Activated CD8-positive, alpha-beta T cell treated with anti-CD3 and anti-CD28 coated beads for 36 hours (primary cell): ENCODE measurements at regions of chr10 and their contacts with region 1.

Region 1: GRCh38 chr10:60964257-60965235 is 20.6 kb upstream of the RHOBTB1 start:
- DNase-seq: peak; percentile 64
- ATAC-seq: peak; percentile 75
- H3K4me3 Mint-ChIP-seq: no peak overlapping the region
- H3K27ac Mint-ChIP-seq: no peak overlapping the region
- H3K4me1 Mint-ChIP-seq: peaks cover 16% of the 10 kb centered on the region
- H3K27me3 Mint-ChIP-seq: peaks cover 10% of the 10 kb centered on the region
- CTCF ChIP-seq: peak; percentile 57

Region 2: GRCh38 chr10:60816628-60817397 is 147.7 kb before region 1 on chr10:
- CTCF ChIA-PET with region 1: interaction called, 9 read pairs
- POLR2A ChIA-PET with region 1: no interaction called
- intact Hi-C with region 1: loop called (anchors 2 kb)
- DNase-seq: peak; percentile 33
- ATAC-seq: peak; percentile 85
- H3K4me3 Mint-ChIP-seq: no peak overlapping the region
- H3K27ac Mint-ChIP-seq: no peak overlapping the region
- H3K4me1 Mint-ChIP-seq: no peaks in the 10 kb centered on the region
- H3K27me3 Mint-ChIP-seq: no peaks in the 10 kb centered on the region
- CTCF ChIP-seq: peak; percentile 88

Region 3: GRCh38 chr10:60883187-60883586 is 81.4 kb before region 1 on chr10:
- CTCF ChIA-PET with region 1: no interaction called
- POLR2A ChIA-PET with region 1: no interaction called
- intact Hi-C with region 1: loop called (anchors 10 kb)
- DNase-seq: no peak
- ATAC-seq: no peak
- H3K4me3 Mint-ChIP-seq: no peak overlapping the region
- H3K27ac Mint-ChIP-seq: no peak overlapping the region
- H3K4me1 Mint-ChIP-seq: no peaks in the 10 kb centered on the region
- H3K27me3 Mint-ChIP-seq: no peaks in the 10 kb centered on the region
- CTCF ChIP-seq: no peak

Region 4: GRCh38 chr10:60937784-60938654 is 26.5 kb before region 1 on chr10:
- CTCF ChIA-PET with region 1: no interaction called
- POLR2A ChIA-PET with region 1: no interaction called
- intact Hi-C with region 1: no loop called
- DNase-seq: no peak
- ATAC-seq: no peak
- H3K4me3 Mint-ChIP-seq: no peak overlapping the region
- H3K27ac Mint-ChIP-seq: no peak overlapping the region
- H3K4me1 Mint-ChIP-seq: peaks cover 4% of the 10 kb centered on the region
- H3K27me3 Mint-ChIP-seq: peaks cover 19% of the 10 kb centered on the region
- CTCF ChIP-seq: no peak

Region 5: GRCh38 chr10:61188691-61189090 is 224.1 kb after region 1 on chr10:
- CTCF ChIA-PET with region 1: no interaction called
- POLR2A ChIA-PET with region 1: no interaction called
- intact Hi-C with region 1: no loop called
- DNase-seq: no peak
- ATAC-seq: no peak
- H3K4me3 Mint-ChIP-seq: no peak overlapping the region
- H3K27ac Mint-ChIP-seq: no peak overlapping the region
- H3K4me1 Mint-ChIP-seq: no peaks in the 10 kb centered on the region
- H3K27me3 Mint-ChIP-seq: no peaks in the 10 kb centered on the region
- CTCF ChIP-seq: no peak